Left lung (tissue), 14 donors: ENCODE measurements at regions of chr11 and their contacts with region 1.

Region 1: DNA sequence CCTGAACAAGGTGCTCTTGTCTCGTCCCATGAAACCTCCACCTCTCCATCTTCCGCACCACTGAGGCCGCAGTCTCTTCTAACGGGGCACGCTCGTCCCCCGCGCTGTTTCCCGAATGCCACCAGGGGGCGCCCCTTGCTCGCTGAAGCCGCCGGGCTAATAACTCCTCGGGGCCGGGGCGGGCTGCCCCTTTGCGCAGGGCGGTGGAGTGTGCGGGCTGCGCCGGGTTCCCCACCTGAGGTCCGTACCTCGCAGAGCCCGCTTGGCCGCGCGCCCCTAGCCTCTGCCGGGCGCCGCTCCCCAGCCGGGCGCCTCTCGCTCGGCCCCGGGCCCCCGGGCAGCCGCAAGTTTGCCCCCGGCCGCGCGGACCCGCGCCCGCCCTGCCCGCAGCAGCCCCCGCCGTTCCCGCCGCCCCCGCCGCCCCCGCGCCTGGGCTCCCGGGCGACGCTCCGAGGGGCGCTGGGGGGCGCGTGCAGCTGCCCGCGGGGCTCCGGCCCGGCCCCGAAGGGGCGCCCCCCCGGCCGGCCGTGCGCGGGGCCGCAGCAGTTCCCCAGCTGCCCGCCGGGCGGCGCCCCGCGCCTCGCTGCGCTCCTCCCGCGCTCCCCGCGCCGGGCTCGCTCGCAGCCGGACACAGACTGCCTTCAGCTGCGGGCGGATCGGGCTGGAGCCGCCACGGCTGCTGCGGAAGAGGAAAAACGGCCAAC is at the start of gene GRIK4:
- DNase-seq: peak; percentile 77 to 93 (median 84)
- ATAC-seq: peak; percentile 95
- H3K4me3 ChIP-seq: peak within 1 kb of the TSS in 1 of 2 donors; percentile 22
- H3K27ac ChIP-seq: no peak within 1 kb of the TSS
- H3K4me1 ChIP-seq: no peaks in the 10 kb centered on the region
- H3K27me3 ChIP-seq: peaks cover 4 to 84% of the 10 kb centered on the region in 2 donors
- CTCF ChIP-seq: peak; percentile 90
- polyA plus RNA-seq, gene GRIK4: 6.9 to 10.1 (median 8.1) TPM

Region 2: DNA sequence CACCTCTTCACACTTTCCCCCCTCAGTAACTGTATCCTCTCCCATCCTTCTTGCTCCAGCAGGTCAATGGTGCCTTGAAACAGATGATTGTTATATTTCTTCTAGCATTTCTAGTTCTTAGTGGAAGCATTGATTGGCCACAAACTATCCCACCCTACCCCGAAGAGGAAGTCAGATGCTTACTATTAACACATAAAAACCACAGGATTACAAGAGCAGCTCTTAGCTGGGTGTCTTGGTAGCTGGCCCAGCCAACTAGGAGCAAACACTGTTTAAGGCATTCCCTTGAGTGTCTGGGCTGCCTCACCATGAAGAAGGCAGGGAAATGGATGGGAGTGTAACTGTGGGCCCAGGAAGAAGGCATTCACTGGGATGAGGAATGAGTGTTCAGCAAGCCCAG is 176.9 kb after region 1 on chr11:
- intact Hi-C with region 1: loop called in 1 of 2 experiments (anchors 5 kb)
- DNase-seq: no peak
- ATAC-seq: no peak
- H3K4me3 ChIP-seq: no peak overlapping the region
- H3K27ac ChIP-seq: no peak overlapping the region
- H3K4me1 ChIP-seq: no peaks in the 10 kb centered on the region
- H3K27me3 ChIP-seq: peaks cover 0 to 18% of the 10 kb centered on the region in 2 donors
- CTCF ChIP-seq: no peak

Region 3: GRCh38 chr11:120952461-120953434 is 441.5 kb after region 1 on chr11:
- intact Hi-C with region 1: loop called in 1 of 2 experiments (anchors 5 kb)
- DNase-seq: peak; percentile 56 to 81 (median 68)
- ATAC-seq: peak; percentile 99
- H3K4me3 ChIP-seq: no peak overlapping the region
- H3K27ac ChIP-seq: no peak overlapping the region
- H3K4me1 ChIP-seq: peaks cover 0 to 5% of the 10 kb centered on the region in 2 donors
- H3K27me3 ChIP-seq: peaks cover 0 to 11% of the 10 kb centered on the region in 2 donors
- CTCF ChIP-seq: peak; percentile 49 to 61

Region 4: GRCh38 chr11:121194731-121195596 is 683.7 kb after region 1 on chr11:
- intact Hi-C with region 1: loop called in 1 of 2 experiments (anchors 10 kb)
- DNase-seq: peak in 2 of 4 donors; percentile 77 to 81
- ATAC-seq: peak; percentile 93
- H3K4me3 ChIP-seq: no peak overlapping the region
- H3K27ac ChIP-seq: no peak overlapping the region
- H3K4me1 ChIP-seq: peaks cover 0 to 5% of the 10 kb centered on the region in 2 donors
- H3K27me3 ChIP-seq: peaks cover 4 to 24% of the 10 kb centered on the region in 2 donors
- CTCF ChIP-seq: peak; percentile 57 to 80